Mucosa of descending colon (tissue), 3 donors: ENCODE measurements at regions of chr5 and their contacts with region 1.

Region 1: DNA sequence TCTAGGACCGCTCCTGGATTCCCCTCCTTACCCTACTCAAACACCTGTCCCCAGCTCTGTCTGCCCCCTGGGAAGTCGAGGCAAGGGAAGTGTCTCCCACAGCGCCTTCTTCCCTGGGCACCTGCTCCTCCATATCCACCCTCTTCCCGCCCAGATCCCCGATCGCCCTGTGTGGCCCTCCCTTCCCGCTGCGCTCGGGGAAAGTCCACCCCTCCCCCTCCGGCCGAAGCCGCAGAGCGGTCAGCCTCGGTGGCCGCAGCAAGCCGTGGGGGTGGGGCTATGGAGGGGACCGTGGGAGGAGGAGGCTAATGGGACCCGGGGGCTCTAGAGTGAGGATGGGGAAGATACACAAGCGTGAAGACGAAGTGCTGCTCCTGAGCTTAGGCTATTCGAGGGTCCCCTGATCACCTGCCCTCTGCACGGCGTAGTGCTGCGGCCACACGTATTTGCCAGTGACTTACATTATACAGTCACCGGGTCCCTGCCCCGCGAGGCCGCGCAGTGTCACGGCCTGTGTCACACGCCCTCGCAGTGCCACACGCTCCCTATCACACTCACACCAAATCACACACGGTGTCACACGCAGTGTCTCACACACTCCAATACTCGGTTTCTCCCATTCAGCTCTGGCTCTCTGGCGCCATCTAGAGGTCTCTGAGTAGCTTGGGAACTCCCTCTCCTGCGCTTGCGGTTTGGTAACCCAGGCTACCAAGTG is 658 bp upstream of the PCDH1 start:
- DNase-seq: peak; percentile 83 to 96 (median 88)
- ATAC-seq: peak; percentile 65
- H3K4me3 ChIP-seq: no peak overlapping the region
- H3K4me1 ChIP-seq: peaks cover 10% of the 10 kb centered on the region
- CTCF ChIP-seq: peak; percentile 97

Region 2: GRCh38 chr5:141691867-141692532 is 186.9 kb before region 1 on chr5:
- intact Hi-C with region 1: loop called in 1 of 2 experiments (anchors 5 kb)
- DNase-seq: peak; percentile 88 to 94 (median 93)
- ATAC-seq: peak; percentile 96
- H3K4me3 ChIP-seq: no peak overlapping the region
- H3K4me1 ChIP-seq: peaks cover 9% of the 10 kb centered on the region
- CTCF ChIP-seq: peak; percentile 98

Region 3: DNA sequence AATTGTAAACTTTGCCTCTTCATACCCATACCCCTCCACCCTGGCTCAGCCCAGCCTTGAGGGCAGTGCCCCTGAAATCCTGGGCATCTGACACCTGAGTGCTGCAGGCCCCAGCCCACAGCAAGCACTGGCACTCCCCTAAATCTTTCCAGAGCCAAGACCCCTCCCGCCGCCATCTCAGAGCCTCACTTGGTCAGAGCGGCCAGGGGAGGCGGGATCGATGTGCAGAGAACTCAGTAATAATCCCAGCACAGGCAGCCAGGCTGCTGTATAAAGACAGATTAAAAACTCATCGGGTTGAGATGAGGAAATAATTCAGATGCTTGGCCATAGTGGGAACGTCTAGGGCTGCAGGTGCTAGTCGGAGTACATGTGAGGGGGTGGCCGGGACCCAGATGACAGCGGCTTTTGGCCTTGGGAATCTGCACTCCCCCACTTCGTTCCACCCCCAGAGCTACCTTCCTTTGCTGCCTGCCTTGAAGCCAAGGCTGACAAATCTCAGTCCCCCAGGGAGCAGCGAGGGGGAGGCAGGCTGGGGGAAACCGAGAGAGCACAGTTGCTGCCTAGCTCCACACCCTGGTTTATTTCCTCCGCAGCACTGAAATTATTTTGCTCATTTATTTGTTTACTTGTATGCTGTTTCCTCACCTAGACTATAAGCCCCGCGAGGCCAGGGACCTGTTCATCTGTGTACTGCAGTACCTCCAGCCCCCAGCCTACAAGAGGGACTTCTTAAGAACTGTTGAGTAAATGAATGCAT is 177.3 kb before region 1 on chr5:
- intact Hi-C with region 1: loop called in 1 of 2 experiments (anchors 5 kb)
- DNase-seq: no peak
- ATAC-seq: no peak
- H3K4me3 ChIP-seq: no peak overlapping the region
- H3K4me1 ChIP-seq: peaks cover 30% of the 10 kb centered on the region
- CTCF ChIP-seq: no peak

Region 4: GRCh38 chr5:142024771-142025304 is 146.0 kb after region 1 on chr5:
- intact Hi-C with region 1: no loop called
- DNase-seq: peak; percentile 79 to 92 (median 83)
- ATAC-seq: peak; percentile 99
- H3K4me3 ChIP-seq: no peak overlapping the region
- H3K4me1 ChIP-seq: no peaks in the 10 kb centered on the region
- CTCF ChIP-seq: no peak